ENCODE measurements at regions of chr21 and their contacts with region 1.

Region 1: GRCh38 chr21:16294128-16294527 is 564.3 kb downstream of the USP25 start:
- DNase-seq: no peak
- H3K4me3 ChIP-seq: no peak overlapping the region
- CTCF ChIP-seq: no peak

Region 2: GRCh38 chr21:16194095-16194787 is 99.9 kb before region 1 on chr21:
- in situ Hi-C with region 1: loop called (anchors 5 kb)
- DNase-seq: peak; percentile 51
- H3K4me3 ChIP-seq: peak overlapping the region; percentile 58
- CTCF ChIP-seq: peak; percentile 44

Region 3: GRCh38 chr21:16330082-16330907 is 36.2 kb after region 1 on chr21:
- in situ Hi-C with region 1: no loop called
- DNase-seq: peak; percentile 77
- H3K4me3 ChIP-seq: no peak overlapping the region
- CTCF ChIP-seq: peak; percentile 66

Region 4: GRCh38 chr21:16342932-16343331 is 48.8 kb after region 1 on chr21:
- in situ Hi-C with region 1: no loop called
- DNase-seq: no peak
- H3K4me3 ChIP-seq: no peak overlapping the region
- CTCF ChIP-seq: no peak